Left lung (tissue), 14 donors: ENCODE measurements at regions of chr22 and their contacts with region 1.

Region 1: DNA sequence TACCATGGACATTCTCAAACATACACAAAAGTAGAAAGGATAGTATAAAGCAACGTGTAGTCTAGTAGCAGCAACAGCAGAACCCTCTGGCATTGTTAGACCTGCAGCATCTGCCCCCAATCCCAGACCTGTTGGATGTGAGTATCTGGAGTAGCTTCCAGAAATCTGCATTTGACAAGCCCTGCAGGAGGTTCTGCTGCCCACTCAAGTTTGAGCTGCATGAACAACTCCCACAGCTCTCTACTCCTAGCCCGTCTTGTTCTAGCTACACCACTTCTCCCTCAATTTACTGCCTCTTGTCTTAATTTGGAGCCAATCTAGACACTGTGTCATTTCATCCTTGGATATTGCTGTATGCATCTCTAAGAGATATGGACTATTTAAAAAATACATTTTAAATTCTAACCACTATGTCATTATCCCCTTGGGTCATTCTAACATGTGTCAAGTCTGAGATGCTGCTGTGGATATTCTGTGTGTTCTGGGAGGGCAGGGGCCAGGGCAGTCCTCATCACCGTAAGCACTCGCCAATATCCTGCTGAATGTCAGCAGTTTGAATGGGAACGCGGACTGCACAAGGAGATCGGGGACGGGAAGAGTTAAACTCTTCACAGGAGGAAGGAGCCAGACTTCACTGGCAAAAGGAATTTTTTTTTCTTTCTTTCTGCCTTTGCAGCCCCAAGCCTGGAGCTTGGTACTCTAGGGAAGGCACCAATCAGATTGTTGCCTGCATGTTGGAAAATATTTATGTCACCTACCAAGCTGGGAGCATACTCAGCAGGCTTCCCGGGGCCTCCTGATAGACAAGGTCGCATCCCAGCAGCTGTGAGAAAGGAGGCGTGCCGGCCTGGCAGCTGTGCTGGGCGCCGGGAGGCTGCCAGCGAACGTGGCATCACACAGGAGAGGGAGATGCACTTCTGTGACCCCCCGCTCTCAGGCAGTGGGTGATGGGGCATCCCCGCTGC is 429.0 kb downstream of the MIAT start:
- DNase-seq: no peak
- ATAC-seq: no peak
- H3K4me3 ChIP-seq: no peak overlapping the region
- H3K27ac ChIP-seq: no peak overlapping the region
- H3K4me1 ChIP-seq: no peaks in the 10 kb centered on the region
- H3K27me3 ChIP-seq: peaks cover 0 to 63% of the 10 kb centered on the region in 2 donors
- CTCF ChIP-seq: no peak

Region 2: GRCh38 chr22:27019827-27020226 is 66.5 kb before region 1 on chr22:
- intact Hi-C with region 1: loop called in 1 of 2 experiments (anchors 10 kb)
- DNase-seq: no peak
- ATAC-seq: no peak
- H3K4me3 ChIP-seq: no peak overlapping the region
- H3K27ac ChIP-seq: no peak overlapping the region
- H3K4me1 ChIP-seq: no peaks in the 10 kb centered on the region
- H3K27me3 ChIP-seq: peaks cover 0 to 25% of the 10 kb centered on the region in 2 donors
- CTCF ChIP-seq: no peak